WTC11 (cell line): ENCODE measurements at regions of chr5 and their contacts with region 1.

Region 1: DNA sequence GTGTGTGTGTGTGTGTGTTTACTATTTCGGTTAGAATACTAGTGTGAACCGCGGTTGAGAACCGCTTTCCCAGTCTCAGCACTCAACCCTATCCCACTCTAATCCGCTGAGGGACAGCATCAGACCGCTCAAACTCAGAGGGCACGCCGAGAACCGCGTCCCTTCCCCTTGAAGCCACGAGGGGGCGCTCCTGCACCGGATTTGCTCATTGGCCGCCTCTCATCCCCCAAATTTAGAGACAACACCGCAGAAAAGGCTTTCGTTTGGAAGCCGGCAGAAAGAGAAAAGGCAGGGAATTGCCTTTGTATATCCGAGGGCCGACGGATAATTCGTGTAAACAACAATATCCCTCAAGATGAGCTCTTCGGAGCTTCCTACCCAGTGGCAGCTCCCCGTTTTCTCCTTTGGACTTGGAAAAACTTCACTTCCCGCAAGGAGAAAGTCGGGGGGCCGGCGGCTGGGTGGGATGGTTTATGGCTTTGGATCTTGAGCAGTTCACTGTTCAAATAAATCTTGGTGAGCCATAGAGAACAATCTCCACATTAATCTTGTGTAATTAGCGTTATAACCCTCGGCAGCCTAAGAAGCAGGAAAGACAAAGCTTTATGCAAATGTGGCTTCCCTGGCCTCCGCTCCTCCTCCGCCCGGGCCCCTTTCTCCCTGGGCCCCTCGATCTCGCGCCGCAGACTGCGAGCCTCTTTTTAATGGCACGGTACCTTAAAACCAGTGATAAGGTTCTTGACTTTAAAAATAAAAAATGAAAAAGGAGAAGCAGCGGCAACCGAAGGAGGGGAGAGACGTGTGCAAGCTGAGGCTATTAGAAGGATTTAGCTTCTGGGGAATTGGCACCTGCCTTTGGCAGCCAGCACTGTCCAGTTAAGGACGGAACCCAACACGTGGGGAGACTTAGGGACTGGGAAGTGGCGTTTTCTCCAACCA is 296.8 kb downstream of the PARP8 start:
- DNase-seq: peak; percentile 84
- ATAC-seq: peak; percentile 78
- H3K4me3 Mint-ChIP-seq: peak overlapping the region; percentile 77
- H3K27ac Mint-ChIP-seq: no peak overlapping the region
- H3K4me1 Mint-ChIP-seq: peaks cover 37% of the 10 kb centered on the region
- H3K27me3 Mint-ChIP-seq: peaks cover 58% of the 10 kb centered on the region
- CTCF ChIP-seq: peak; percentile 94

Region 2: GRCh38 chr5:51347704-51348103 is 384.5 kb after region 1 on chr5:
- CTCF ChIA-PET with region 1: interaction called, 17 read pairs
- POLR2A ChIA-PET with region 1: interaction called, 3 read pairs
- DNase-seq: no peak
- ATAC-seq: peak; percentile 38; the same call in 1 of the 2 replicates
- H3K4me3 Mint-ChIP-seq: no peak overlapping the region
- H3K27ac Mint-ChIP-seq: no peak overlapping the region
- H3K4me1 Mint-ChIP-seq: no peaks in the 10 kb centered on the region
- H3K27me3 Mint-ChIP-seq: peaks cover 9% of the 10 kb centered on the region
- CTCF ChIP-seq: peak; percentile 28; the same call in 1 of the 2 replicates

Region 3: GRCh38 chr5:51382763-51383490 is 419.7 kb after region 1 on chr5 and contains the start of gene ISL1:
- CTCF ChIA-PET with region 1: interaction called, 18 read pairs
- POLR2A ChIA-PET with region 1: interaction called, 4 read pairs
- DNase-seq: peak; percentile 88
- ATAC-seq: peak; percentile 79
- H3K4me3 Mint-ChIP-seq: peak within 1 kb of the TSS; percentile 78
- H3K27ac Mint-ChIP-seq: peak within 1 kb of the TSS; percentile 5; the same call in 1 of the 2 replicates
- H3K4me1 Mint-ChIP-seq: peaks cover 87% of the 10 kb centered on the region
- H3K27me3 Mint-ChIP-seq: peaks cover 100% of the 10 kb centered on the region
- CTCF ChIP-seq: no peak
- total RNA-seq, gene ISL1: 0.07 to 0.18 TPM in 2 of 3 replicates, not detected in the other

Region 4: DNA sequence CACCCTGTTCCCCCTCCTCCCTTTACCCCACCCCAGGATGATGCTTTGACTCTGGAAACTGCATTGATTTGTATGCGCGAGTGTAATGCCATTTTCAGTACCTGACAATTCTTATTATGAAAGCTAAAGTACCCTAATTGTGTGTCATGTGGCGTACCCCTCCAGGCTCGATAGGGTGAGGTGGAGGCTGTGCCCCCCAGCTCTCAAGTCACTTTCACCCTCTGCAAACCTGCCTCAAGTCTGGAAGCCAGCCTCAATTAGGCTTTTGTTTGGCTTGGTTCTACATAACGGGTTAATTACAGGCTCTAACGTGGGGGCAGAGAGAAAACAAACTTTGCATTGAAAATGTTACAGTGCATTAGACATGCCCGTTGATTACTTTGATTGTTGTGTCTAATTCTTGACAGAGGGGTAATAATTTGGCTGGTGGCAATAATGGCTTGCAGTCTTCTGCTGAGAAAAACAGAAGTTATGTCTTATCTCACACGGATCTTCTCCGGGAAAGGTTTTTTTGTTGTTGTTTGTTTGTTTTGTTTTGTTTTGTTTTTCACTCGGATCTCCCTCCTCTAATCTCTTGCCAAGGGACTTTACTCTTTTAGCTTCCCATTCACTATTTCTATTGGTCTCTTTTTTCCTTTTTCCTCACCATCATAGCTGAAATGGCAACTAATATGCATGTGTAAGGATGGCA is 432.6 kb after region 1 on chr5:
- CTCF ChIA-PET with region 1: interaction called, 20 read pairs
- POLR2A ChIA-PET with region 1: interaction called, 4 read pairs
- DNase-seq: no peak
- ATAC-seq: no peak
- H3K4me3 Mint-ChIP-seq: no peak overlapping the region
- H3K27ac Mint-ChIP-seq: no peak overlapping the region
- H3K4me1 Mint-ChIP-seq: peaks cover 85% of the 10 kb centered on the region
- H3K27me3 Mint-ChIP-seq: peaks cover 100% of the 10 kb centered on the region
- CTCF ChIP-seq: no peak